Mammary epithelial cell (primary cell): ENCODE measurements at regions of chr16 and their contacts with region 1.

Region 1: DNA sequence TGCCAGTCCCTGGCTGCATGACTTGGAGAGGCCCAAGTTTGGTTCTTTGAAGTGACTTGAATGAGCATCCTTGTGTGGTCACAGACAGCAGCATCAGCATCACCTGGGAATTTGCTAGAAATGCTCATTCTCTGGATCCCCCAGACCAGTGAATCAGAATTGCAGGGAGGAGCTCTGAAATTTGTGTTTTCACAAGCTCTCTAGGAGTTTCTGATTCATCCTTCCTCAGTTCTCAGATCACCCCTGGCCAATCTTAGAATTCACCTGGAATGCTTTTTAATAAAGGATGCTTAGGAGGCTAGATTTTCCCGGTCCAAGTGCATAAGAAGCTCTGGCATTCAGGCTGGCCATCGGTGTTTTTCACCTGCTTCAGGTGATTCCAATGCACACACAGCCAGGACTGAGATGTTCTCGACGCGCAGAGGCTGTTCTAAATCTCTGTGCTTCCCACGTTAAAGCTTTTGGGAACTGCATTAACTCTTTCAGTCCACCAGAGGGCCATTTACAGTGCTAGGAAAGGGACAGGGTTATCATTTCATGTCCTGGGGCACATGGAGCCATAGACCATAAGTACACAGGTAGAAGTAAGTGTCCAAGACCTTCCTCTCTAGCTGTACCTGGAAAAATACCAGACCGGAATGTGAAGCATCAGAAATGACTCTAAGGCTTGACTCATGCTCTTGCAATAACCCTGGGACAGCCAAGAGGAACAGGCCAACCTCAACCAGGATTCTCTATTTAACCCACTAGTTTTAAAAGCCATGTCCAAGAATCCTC is 85.7 kb upstream of the XYLT1 start:
- DNase-seq: peak; percentile 76
- H3K4me3 ChIP-seq: no peak overlapping the region
- H3K27ac ChIP-seq: peak overlapping the region; percentile 8
- H3K4me1 ChIP-seq: peaks cover 57% of the 10 kb centered on the region
- H3K27me3 ChIP-seq: no peaks in the 10 kb centered on the region
- CTCF ChIP-seq: peak; percentile 50 to 66

Region 2: DNA sequence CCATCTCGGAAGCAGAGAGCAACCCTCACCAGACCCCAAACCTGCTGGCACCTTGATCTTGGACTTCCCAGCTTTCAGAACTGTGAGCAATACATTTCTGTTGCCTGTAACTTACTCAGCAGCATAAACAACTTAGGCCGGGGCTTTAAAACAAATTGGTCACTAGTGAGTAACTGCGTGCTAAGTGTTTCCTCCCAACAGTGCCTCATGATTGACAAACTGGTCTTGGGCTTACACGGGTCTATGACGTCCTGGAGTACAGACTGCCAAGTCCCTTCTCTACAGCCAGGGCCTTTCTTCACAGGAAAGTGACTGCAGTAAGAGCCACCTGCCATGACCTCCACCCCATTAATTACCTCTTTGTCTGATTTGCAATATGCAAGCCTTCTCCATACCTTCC is 222.4 kb before region 1 on chr16:
- CTCF ChIA-PET with region 1: no interaction called
- dilution Hi-C with region 1: no loop called
- in situ Hi-C with region 1: no loop called
- intact Hi-C with region 1: no loop called
- DNase-seq: peak; percentile 13
- H3K4me3 ChIP-seq: no peak overlapping the region
- H3K27ac ChIP-seq: no peak overlapping the region
- H3K4me1 ChIP-seq: no peaks in the 10 kb centered on the region
- H3K27me3 ChIP-seq: no peaks in the 10 kb centered on the region
- CTCF ChIP-seq: no peak

Region 3: GRCh38 chr16:17467923-17468540 is 88.4 kb before region 1 on chr16:
- CTCF ChIA-PET with region 1: no interaction called
- dilution Hi-C with region 1: no loop called
- in situ Hi-C with region 1: loop called in 1 of 2 experiments (anchors 5 kb)
- intact Hi-C with region 1: loop called (anchors 2 kb)
- DNase-seq: peak; percentile 6
- H3K4me3 ChIP-seq: no peak overlapping the region
- H3K27ac ChIP-seq: no peak overlapping the region
- H3K4me1 ChIP-seq: peaks cover 28% of the 10 kb centered on the region
- H3K27me3 ChIP-seq: no peaks in the 10 kb centered on the region
- CTCF ChIP-seq: peak; percentile 54 to 85

Region 4: GRCh38 chr16:17483351-17483750 is 73.1 kb before region 1 on chr16:
- CTCF ChIA-PET with region 1: no interaction called
- dilution Hi-C with region 1: loop called (anchors 5 kb)
- in situ Hi-C with region 1: no loop called
- intact Hi-C with region 1: no loop called
- DNase-seq: peak; percentile 57
- H3K4me3 ChIP-seq: peak overlapping the region in 2 of 3 experiments; percentile 13 to 32
- H3K27ac ChIP-seq: peak overlapping the region; percentile 13
- H3K4me1 ChIP-seq: peaks cover 8% of the 10 kb centered on the region
- H3K27me3 ChIP-seq: no peaks in the 10 kb centered on the region
- CTCF ChIP-seq: no peak

Region 5: GRCh38 chr16:17571499-17572093 is 15.1 kb after region 1 on chr16:
- CTCF ChIA-PET with region 1: no interaction called
- dilution Hi-C with region 1: no loop called
- in situ Hi-C with region 1: no loop called
- intact Hi-C with region 1: loop called (anchors 1 kb)
- DNase-seq: peak; percentile 78
- H3K4me3 ChIP-seq: no peak overlapping the region
- H3K27ac ChIP-seq: peak overlapping the region; percentile 90
- H3K4me1 ChIP-seq: peaks cover 31% of the 10 kb centered on the region
- H3K27me3 ChIP-seq: no peaks in the 10 kb centered on the region
- CTCF ChIP-seq: no peak

Region 6: GRCh38 chr16:17578921-17579874 is 22.7 kb after region 1 on chr16:
- CTCF ChIA-PET with region 1: interaction called, 3 read pairs
- dilution Hi-C with region 1: no loop called
- in situ Hi-C with region 1: no loop called
- intact Hi-C with region 1: loop called (anchors 1 kb)
- DNase-seq: peak; percentile 60
- H3K4me3 ChIP-seq: no peak overlapping the region
- H3K27ac ChIP-seq: no peak overlapping the region
- H3K4me1 ChIP-seq: peaks cover 9% of the 10 kb centered on the region
- H3K27me3 ChIP-seq: no peaks in the 10 kb centered on the region
- CTCF ChIP-seq: peak; percentile 94 to 96

Region 7: DNA sequence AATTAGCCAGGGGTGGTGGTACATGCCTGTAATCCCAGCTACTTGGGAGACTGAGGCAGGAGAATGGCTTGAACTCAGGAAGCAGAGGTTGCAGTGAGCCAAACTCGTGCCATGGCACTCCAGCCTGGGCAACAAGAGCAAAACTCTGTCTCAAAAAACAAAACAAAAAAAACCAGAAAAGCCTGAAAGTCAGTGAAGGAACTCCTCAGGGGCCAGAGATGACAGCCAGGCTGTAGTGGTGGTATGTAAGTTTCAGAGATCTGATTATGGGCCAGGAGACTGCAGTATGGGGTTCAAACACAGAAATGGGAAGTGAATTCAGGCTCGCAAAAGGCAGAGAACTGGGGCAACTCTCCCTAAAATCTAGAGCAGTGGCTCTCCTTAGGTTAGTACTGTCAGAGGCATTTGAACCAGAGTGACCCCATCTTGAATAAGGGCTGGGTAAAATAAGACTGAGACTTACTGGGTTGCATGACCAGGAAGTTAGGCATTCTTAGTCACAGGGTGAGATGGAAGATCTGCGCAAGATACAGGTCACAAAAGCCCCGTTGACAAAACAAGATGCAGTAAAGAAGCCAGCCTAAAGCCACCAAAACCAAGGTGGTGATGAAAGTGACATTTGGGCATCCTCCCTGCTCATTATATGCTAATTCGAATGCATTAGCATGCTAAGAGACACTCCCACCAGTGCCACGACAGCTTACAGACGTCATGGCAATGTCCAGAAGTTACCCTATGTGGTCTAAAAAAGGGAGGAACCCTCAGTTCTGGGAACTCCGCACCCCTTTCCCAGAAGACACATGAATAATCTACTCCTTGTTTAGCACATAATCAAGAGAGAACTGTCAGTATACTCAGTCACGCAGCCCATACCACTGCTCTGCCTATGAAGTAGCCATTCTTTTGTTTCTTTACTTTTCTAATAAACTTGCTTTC is 34.5 kb after region 1 on chr16:
- CTCF ChIA-PET with region 1: no interaction called
- dilution Hi-C with region 1: no loop called
- in situ Hi-C with region 1: no loop called
- intact Hi-C with region 1: no loop called
- DNase-seq: no peak
- H3K4me3 ChIP-seq: no peak overlapping the region
- H3K27ac ChIP-seq: no peak overlapping the region
- H3K4me1 ChIP-seq: peaks cover 1% of the 10 kb centered on the region
- H3K27me3 ChIP-seq: no peaks in the 10 kb centered on the region
- CTCF ChIP-seq: no peak

Region 8: GRCh38 chr16:17633104-17633951 is 76.9 kb after region 1 on chr16:
- CTCF ChIA-PET with region 1: no interaction called
- dilution Hi-C with region 1: no loop called
- in situ Hi-C with region 1: loop called in 1 of 2 experiments (anchors 5 kb)
- intact Hi-C with region 1: no loop called
- DNase-seq: peak; percentile 69
- H3K4me3 ChIP-seq: peak overlapping the region in 2 of 3 experiments; percentile 9 to 35
- H3K27ac ChIP-seq: peak overlapping the region; percentile 64
- H3K4me1 ChIP-seq: peaks cover 17% of the 10 kb centered on the region
- H3K27me3 ChIP-seq: no peaks in the 10 kb centered on the region
- CTCF ChIP-seq: no peak

Region 9: DNA sequence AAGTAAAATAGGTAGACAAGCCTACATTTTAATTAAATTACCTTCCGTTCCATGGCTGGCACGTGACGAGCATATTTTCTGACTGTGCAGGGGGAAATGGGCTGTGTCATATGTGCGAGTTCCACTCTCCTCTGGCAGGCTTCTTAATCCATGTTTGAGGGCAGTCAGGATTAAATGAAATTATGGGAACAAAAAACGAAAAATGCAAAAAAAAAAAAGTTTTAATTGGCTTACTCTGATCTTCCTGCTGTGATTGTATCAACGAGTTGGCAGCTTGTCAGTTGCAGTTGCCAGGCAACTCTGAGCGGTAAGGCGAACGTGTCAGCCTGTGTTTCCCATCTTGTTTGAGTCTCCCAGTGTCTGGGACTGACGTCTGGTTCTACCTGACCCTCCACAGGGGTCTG is 217.2 kb after region 1 on chr16:
- CTCF ChIA-PET with region 1: no interaction called
- dilution Hi-C with region 1: no loop called
- in situ Hi-C with region 1: no loop called
- intact Hi-C with region 1: no loop called
- DNase-seq: no peak
- H3K4me3 ChIP-seq: no peak overlapping the region
- H3K27ac ChIP-seq: no peak overlapping the region
- H3K4me1 ChIP-seq: no peaks in the 10 kb centered on the region
- H3K27me3 ChIP-seq: no peaks in the 10 kb centered on the region
- CTCF ChIP-seq: no peak

Region 10: GRCh38 chr16:17836868-17837602 is 280.6 kb after region 1 on chr16:
- CTCF ChIA-PET with region 1: no interaction called
- dilution Hi-C with region 1: no loop called
- in situ Hi-C with region 1: no loop called
- intact Hi-C with region 1: loop called (anchors 10 kb)
- DNase-seq: peak; percentile 93
- H3K4me3 ChIP-seq: no peak overlapping the region
- H3K27ac ChIP-seq: no peak overlapping the region
- H3K4me1 ChIP-seq: no peaks in the 10 kb centered on the region
- H3K27me3 ChIP-seq: no peaks in the 10 kb centered on the region
- CTCF ChIP-seq: no peak